ENCODE measurements at regions of chr19 and their contacts with region 1.

Region 1: DNA sequence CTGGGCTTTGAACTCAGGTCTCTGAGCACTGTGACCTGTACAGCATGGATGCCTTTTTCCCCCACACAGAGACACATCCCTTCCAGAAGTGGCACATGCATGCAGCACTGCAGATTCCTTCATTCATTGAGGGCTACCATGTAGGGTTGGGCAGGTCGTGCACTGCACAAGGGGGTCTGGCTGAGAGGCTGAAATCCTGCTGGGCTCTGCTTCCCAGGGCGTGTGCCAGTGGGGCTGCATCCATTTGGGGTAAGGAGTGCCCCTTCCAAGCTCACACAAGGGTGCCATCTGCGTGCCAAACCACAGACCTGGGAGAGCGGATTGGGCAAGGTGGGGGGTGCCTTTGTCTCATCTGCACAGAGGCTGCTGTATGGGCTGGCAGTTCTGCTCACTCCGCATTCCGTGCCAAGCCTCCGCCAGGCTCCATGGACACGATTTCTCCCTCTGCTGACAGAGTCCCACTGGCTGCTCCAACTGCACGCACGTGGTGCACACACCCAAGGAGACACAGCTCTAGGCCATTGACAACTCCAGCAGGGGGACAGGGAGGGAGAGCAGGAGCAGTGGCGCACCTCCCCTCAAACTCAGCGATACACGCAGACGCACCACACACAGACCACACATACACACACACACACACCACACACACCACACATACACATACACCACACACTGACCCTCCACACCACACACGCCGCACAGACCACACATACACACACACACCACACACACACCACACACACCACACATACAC is 4.5 kb upstream of the SHISA7 start:
- DNase-seq: no peak
- ATAC-seq: peak; percentile 19
- H3K4me3 ChIP-seq: no peak overlapping the region
- H3K4me3 Mint-ChIP-seq: no peak overlapping the region
- H3K27ac ChIP-seq: no peak overlapping the region
- H3K27ac Mint-ChIP-seq: no peak overlapping the region
- H3K4me1 ChIP-seq: peaks cover 0 to 11% of the 10 kb centered on the region in 2 donors
- H3K4me1 Mint-ChIP-seq: peaks cover 2 to 28% (median 19%) of the 10 kb centered on the region in 7 donors
- H3K27me3 ChIP-seq: peaks cover 10 to 27% of the 10 kb centered on the region in 2 donors
- H3K27me3 Mint-ChIP-seq: peaks cover 23 to 52% (median 37%) of the 10 kb centered on the region in 5 donors

Region 2: GRCh38 chr19:55166530-55167268 is 280.9 kb before region 1 on chr19 and contains the start of gene DNAAF3:
- CTCF ChIA-PET with region 1: no interaction called
- POLR2A ChIA-PET with region 1: no interaction called
- intact Hi-C with region 1: loop called in 1 of 2 experiments (anchors 10 kb)
- DNase-seq: peak in 8 of 9 donors; percentile 37 to 82 (median 60)
- ATAC-seq: peak; percentile 92
- H3K4me3 ChIP-seq: no peak within 1 kb of the TSS
- H3K4me3 Mint-ChIP-seq: peak within 1 kb of the TSS; percentile 41 to 89 (median 70)
- H3K27ac ChIP-seq: no peak within 1 kb of the TSS
- H3K27ac Mint-ChIP-seq: peak within 1 kb of the TSS in 6 of 9 donors; percentile 32 to 88 (median 70)
- H3K4me1 ChIP-seq: peaks cover 0 to 7% of the 10 kb centered on the region in 2 donors
- H3K4me1 Mint-ChIP-seq: peaks cover 10 to 17% (median 13%) of the 10 kb centered on the region in 7 donors
- H3K27me3 ChIP-seq: peaks cover 4 to 26% of the 10 kb centered on the region in 2 donors
- H3K27me3 Mint-ChIP-seq: peaks cover 61 to 70% (median 66%) of the 10 kb centered on the region in 5 donors
- total RNA-seq, gene DNAAF3: not detected

Region 3: GRCh38 chr19:55563261-55563690 is 115.7 kb after region 1 on chr19:
- CTCF ChIA-PET with region 1: no interaction called
- POLR2A ChIA-PET with region 1: no interaction called
- intact Hi-C with region 1: no loop called
- DNase-seq: no peak
- ATAC-seq: no peak
- H3K4me3 ChIP-seq: no peak overlapping the region
- H3K4me3 Mint-ChIP-seq: no peak overlapping the region
- H3K27ac ChIP-seq: no peak overlapping the region
- H3K27ac Mint-ChIP-seq: no peak overlapping the region
- H3K4me1 ChIP-seq: no peaks in the 10 kb centered on the region
- H3K4me1 Mint-ChIP-seq: no peaks in the 10 kb centered on the region
- H3K27me3 ChIP-seq: no peaks in the 10 kb centered on the region
- H3K27me3 Mint-ChIP-seq: peaks cover 0 to 24% (median 13%) of the 10 kb centered on the region in 5 donors

Region 4: GRCh38 chr19:55993492-55993891 is 545.9 kb after region 1 on chr19:
- CTCF ChIA-PET with region 1: no interaction called
- POLR2A ChIA-PET with region 1: no interaction called
- intact Hi-C with region 1: no loop called
- DNase-seq: no peak
- ATAC-seq: no peak
- H3K4me3 ChIP-seq: no peak overlapping the region
- H3K4me3 Mint-ChIP-seq: no peak overlapping the region
- H3K27ac ChIP-seq: no peak overlapping the region
- H3K27ac Mint-ChIP-seq: no peak overlapping the region
- H3K4me1 ChIP-seq: no peaks in the 10 kb centered on the region
- H3K4me1 Mint-ChIP-seq: no peaks in the 10 kb centered on the region
- H3K27me3 ChIP-seq: no peaks in the 10 kb centered on the region
- H3K27me3 Mint-ChIP-seq: peaks cover 0 to 14% (median 0%) of the 10 kb centered on the region in 5 donors

Measured in naive thymus-derived CD4-positive, alpha-beta T cell (primary cell).